ENCODE measurements at regions of chr2 and their contacts with region 1.

Region 1: GRCh38 chr2:60756191-60757041 is at the start of gene PAPOLG:
- DNase-seq: peak; percentile 94 to 98 (median 97)
- ATAC-seq: peak; percentile 98
- H3K4me3 ChIP-seq: peak within 1 kb of the TSS; percentile 85 to 98
- H3K4me3 Mint-ChIP-seq: peak within 1 kb of the TSS; percentile 100
- H3K27ac ChIP-seq: peak within 1 kb of the TSS; percentile 86 to 91
- H3K27ac Mint-ChIP-seq: peak within 1 kb of the TSS; percentile 100
- H3K4me1 ChIP-seq: peaks cover 20% of the 10 kb centered on the region
- H3K4me1 Mint-ChIP-seq: peaks cover 43% of the 10 kb centered on the region
- H3K27me3 ChIP-seq: no peaks in the 10 kb centered on the region
- H3K27me3 Mint-ChIP-seq: no peaks in the 10 kb centered on the region
- CTCF ChIP-seq: no peak
- total RNA-seq, gene PAPOLG: 19.1 to 22.3 TPM

Region 2: DNA sequence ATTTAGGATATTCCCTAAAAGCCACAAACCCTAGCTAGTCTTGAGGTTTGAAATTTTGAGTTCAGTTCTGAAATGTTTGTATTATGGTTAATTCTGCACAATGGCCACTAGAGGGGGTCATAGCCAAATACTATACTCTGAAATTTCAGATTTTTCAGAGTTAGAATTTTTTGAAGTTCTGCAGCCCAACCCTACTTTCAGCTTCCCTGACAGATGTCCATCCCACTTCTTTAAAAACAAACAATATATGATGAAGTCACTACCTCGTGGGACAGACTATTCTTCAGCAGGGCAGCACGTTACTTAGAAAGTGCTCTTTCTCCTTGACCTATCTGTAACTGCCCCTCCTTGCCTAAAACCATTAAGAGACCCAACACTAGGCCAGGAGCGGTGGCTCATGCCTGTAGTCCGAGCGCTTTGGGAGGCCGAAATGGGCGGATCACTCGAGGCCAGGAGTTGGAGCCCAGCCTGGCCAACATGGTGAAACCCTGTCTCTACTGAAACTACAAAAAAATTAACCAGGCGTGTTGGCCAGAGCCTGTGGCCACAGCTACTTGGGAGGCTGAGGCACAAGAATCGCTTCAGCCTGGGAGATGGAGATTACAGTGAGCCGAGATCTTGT is 48.6 kb before region 1 on chr2:
- CTCF ChIA-PET with region 1: interaction called, 13 read pairs
- POLR2A ChIA-PET with region 1: no interaction called
- intact Hi-C with region 1: loop called (anchors 2 to 5 kb)
- DNase-seq: peak in 2 of 9 experiments; percentile 47 to 64
- ATAC-seq: peak; percentile 58
- H3K4me3 ChIP-seq: no peak overlapping the region
- H3K4me3 Mint-ChIP-seq: no peak overlapping the region
- H3K27ac ChIP-seq: no peak overlapping the region
- H3K27ac Mint-ChIP-seq: no peak overlapping the region
- H3K4me1 ChIP-seq: no peaks in the 10 kb centered on the region
- H3K4me1 Mint-ChIP-seq: no peaks in the 10 kb centered on the region
- H3K27me3 ChIP-seq: no peaks in the 10 kb centered on the region
- H3K27me3 Mint-ChIP-seq: peaks cover 4% of the 10 kb centered on the region
- CTCF ChIP-seq: peak; percentile 83

Region 3: GRCh38 chr2:60818272-60818671 is 61.9 kb after region 1 on chr2:
- CTCF ChIA-PET with region 1: no interaction called
- POLR2A ChIA-PET with region 1: interaction called, 3 read pairs
- intact Hi-C with region 1: loop called in 1 of 2 experiments (anchors 1 kb)
- DNase-seq: peak in 5 of 9 experiments; percentile 40 to 70 (median 50)
- ATAC-seq: no peak
- H3K4me3 ChIP-seq: no peak overlapping the region
- H3K4me3 Mint-ChIP-seq: no peak overlapping the region
- H3K27ac ChIP-seq: peak overlapping the region in 1 of 2 experiments; percentile 83
- H3K27ac Mint-ChIP-seq: peak overlapping the region; percentile 78
- H3K4me1 ChIP-seq: peaks cover 32% of the 10 kb centered on the region
- H3K4me1 Mint-ChIP-seq: peaks cover 43% of the 10 kb centered on the region
- H3K27me3 ChIP-seq: no peaks in the 10 kb centered on the region
- H3K27me3 Mint-ChIP-seq: peaks cover 5% of the 10 kb centered on the region
- CTCF ChIP-seq: peak; percentile 19

Region 4: DNA sequence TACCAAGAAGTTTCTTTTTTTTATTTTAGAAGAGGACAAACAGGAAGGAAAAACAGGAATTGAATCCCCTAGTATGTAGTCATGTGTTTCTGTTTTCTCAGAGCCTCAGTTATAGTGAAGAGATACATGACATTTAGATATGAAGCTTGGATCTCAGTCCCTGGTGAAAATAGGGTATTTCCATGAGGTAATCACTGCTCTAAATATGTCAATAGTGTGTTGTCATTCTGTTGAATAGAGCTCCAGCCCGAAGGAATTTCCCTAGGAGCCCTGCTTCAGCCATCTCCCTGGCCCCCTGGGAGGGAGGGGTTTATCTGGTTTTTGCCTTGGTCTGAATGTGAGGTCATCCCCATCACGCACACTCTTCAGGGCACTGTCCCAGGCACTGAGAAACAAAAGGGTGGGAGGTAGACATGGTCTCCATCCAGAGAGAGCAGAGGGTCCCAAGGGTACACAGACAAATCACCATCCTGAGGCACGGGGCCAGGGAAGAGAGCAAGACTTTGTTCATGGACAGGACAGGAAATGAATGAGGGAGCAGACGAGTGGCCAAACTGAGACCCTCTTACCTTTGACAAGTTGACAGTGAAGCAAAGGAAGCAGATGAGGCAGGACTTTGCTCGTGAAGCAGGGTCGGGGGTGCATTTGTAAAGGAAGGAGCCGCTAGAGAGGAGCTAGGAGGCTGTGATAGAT is 78.0 kb after region 1 on chr2:
- CTCF ChIA-PET with region 1: no interaction called
- POLR2A ChIA-PET with region 1: no interaction called
- intact Hi-C with region 1: no loop called
- DNase-seq: peak in 1 of 9 experiments; percentile 29
- ATAC-seq: no peak
- H3K4me3 ChIP-seq: no peak overlapping the region
- H3K4me3 Mint-ChIP-seq: no peak overlapping the region
- H3K27ac ChIP-seq: no peak overlapping the region
- H3K27ac Mint-ChIP-seq: no peak overlapping the region
- H3K4me1 ChIP-seq: no peaks in the 10 kb centered on the region
- H3K4me1 Mint-ChIP-seq: peaks cover 3% of the 10 kb centered on the region
- H3K27me3 ChIP-seq: peaks cover 0 to 2% of the 10 kb centered on the region in 2 experiments
- H3K27me3 Mint-ChIP-seq: peaks cover 6% of the 10 kb centered on the region
- CTCF ChIP-seq: no peak

Region 5: GRCh38 chr2:61065715-61066709 is 309.6 kb after region 1 on chr2 and contains the start of gene SANBR:
- CTCF ChIA-PET with region 1: no interaction called
- POLR2A ChIA-PET with region 1: no interaction called
- intact Hi-C with region 1: loop called in 1 of 2 experiments (anchors 1 kb)
- DNase-seq: peak; percentile 65 to 92 (median 79)
- ATAC-seq: peak; percentile 97
- H3K4me3 ChIP-seq: peak within 1 kb of the TSS; percentile 50 to 59
- H3K4me3 Mint-ChIP-seq: peak within 1 kb of the TSS; percentile 94
- H3K27ac ChIP-seq: no peak within 1 kb of the TSS
- H3K27ac Mint-ChIP-seq: peak within 1 kb of the TSS; percentile 82
- H3K4me1 ChIP-seq: peaks cover 4% of the 10 kb centered on the region
- H3K4me1 Mint-ChIP-seq: peaks cover 7% of the 10 kb centered on the region
- H3K27me3 ChIP-seq: no peaks in the 10 kb centered on the region
- H3K27me3 Mint-ChIP-seq: no peaks in the 10 kb centered on the region
- CTCF ChIP-seq: no peak
- total RNA-seq, gene SANBR: 0.52 to 0.67 TPM

Region 6: GRCh38 chr2:61854474-61855182 is 1098.2 kb after region 1 on chr2:
- CTCF ChIA-PET with region 1: no interaction called
- POLR2A ChIA-PET with region 1: no interaction called
- intact Hi-C with region 1: loop called in 1 of 2 experiments (anchors 10 kb)
- DNase-seq: peak; percentile 80 to 98 (median 87)
- ATAC-seq: peak; percentile 89
- H3K4me3 ChIP-seq: peak overlapping the region; percentile 79 to 88
- H3K4me3 Mint-ChIP-seq: peak overlapping the region; percentile 97
- H3K27ac ChIP-seq: peak overlapping the region; percentile 64 to 81
- H3K27ac Mint-ChIP-seq: peak overlapping the region; percentile 96
- H3K4me1 ChIP-seq: peaks cover 12% of the 10 kb centered on the region
- H3K4me1 Mint-ChIP-seq: peaks cover 15% of the 10 kb centered on the region
- H3K27me3 ChIP-seq: no peaks in the 10 kb centered on the region
- H3K27me3 Mint-ChIP-seq: no peaks in the 10 kb centered on the region
- CTCF ChIP-seq: no peak

Region 7: DNA sequence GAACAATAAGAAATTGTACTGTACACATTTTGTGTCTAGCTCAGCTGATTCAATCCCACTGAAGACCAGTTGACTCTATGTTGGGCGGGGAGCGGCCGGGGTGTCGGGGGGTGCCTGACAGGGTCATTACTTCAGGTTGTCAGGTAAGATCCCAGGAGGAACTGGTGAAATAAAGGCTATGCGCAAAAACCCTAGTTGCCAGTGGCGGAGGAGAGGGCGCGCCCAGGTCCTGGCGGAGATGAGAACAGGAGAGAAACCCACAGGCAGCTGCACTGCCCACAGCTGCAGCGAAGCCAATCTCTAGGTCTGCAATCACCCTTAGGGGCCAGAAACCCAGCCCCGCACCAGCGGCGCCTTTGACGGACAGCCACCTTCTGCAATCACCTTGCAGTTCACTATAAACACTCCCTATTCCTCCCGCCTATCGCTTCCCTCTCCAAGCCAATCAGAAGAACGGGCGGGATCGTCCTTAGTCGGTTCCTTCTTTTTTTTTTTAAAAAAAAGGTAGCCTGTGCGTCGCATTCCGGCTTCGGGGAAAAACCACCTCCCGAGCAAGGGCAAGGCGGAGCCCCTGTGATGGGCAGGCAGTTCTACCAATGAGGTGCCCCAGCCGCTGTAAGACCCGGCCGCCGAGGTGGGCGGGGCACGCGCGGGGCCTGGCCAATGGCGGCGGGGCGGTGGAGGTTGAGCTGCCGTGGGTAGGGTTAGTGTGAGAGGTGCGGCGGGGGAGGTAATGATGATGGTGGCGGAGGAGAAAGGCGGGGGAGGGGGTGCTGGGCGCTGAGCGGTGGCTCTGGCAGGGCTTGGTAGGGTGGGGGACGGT is 1948.8 kb after region 1 on chr2 and contains the start of gene EHBP1:
- CTCF ChIA-PET with region 1: no interaction called
- POLR2A ChIA-PET with region 1: no interaction called
- intact Hi-C with region 1: loop called (anchors 5 to 10 kb)
- DNase-seq: peak; percentile 93 to 99 (median 97)
- ATAC-seq: peak; percentile 96
- H3K4me3 ChIP-seq: peak within 1 kb of the TSS; percentile 74 to 77
- H3K4me3 Mint-ChIP-seq: peak within 1 kb of the TSS; percentile 85
- H3K27ac ChIP-seq: peak within 1 kb of the TSS; percentile 36 to 65
- H3K27ac Mint-ChIP-seq: peak within 1 kb of the TSS; percentile 79
- H3K4me1 ChIP-seq: peaks cover 11% of the 10 kb centered on the region
- H3K4me1 Mint-ChIP-seq: peaks cover 41% of the 10 kb centered on the region
- H3K27me3 ChIP-seq: no peaks in the 10 kb centered on the region
- H3K27me3 Mint-ChIP-seq: no peaks in the 10 kb centered on the region
- CTCF ChIP-seq: no peak
- total RNA-seq, gene EHBP1: 16.2 to 16.7 TPM

Measured in CD8-positive, alpha-beta T cell (primary cell).